CD14-positive monocyte (primary cell): ENCODE measurements at regions of chr2 and their contacts with region 1.

Region 1: GRCh38 chr2:99180755-99181623 is at the starts of genes MITD1 and MRPL30:
- DNase-seq: peak; percentile 92 to 95 (median 94)
- H3K4me3 ChIP-seq: peak within 1 kb of the TSS; percentile 82 to 95 (median 95)
- H3K4me3 Mint-ChIP-seq: peak within 1 kb of the TSS; percentile 97 to 100
- H3K27ac ChIP-seq: peak within 1 kb of the TSS; percentile 82 to 94
- H3K27ac Mint-ChIP-seq: peak within 1 kb of the TSS; percentile 96 to 99 (median 98)
- H3K4me1 ChIP-seq: peaks cover 24 to 31% of the 10 kb centered on the region in 2 donors
- H3K4me1 Mint-ChIP-seq: peaks cover 48% of the 10 kb centered on the region
- H3K27me3 ChIP-seq: no peaks in the 10 kb centered on the region
- H3K27me3 Mint-ChIP-seq: peaks cover 0 to 1% (median 0%) of the 10 kb centered on the region in 3 donors
- CTCF ChIP-seq: no peak
- polyA plus RNA-seq, gene MITD1: 24.9 to 33.8 (median 25.4) TPM
- polyA plus RNA-seq, gene MRPL30: 6.3 to 14.2 (median 9.7) TPM

Region 2: GRCh38 chr2:98608116-98608999 is 572.6 kb before region 1 on chr2 and contains the starts of genes COA5 and UNC50:
- intact Hi-C with region 1: loop called in 1 of 2 experiments (anchors 5 kb)
- DNase-seq: peak; percentile 90 to 96 (median 94)
- H3K4me3 ChIP-seq: peak within 1 kb of the TSS; percentile 70 to 95 (median 95)
- H3K4me3 Mint-ChIP-seq: peak within 1 kb of the TSS; percentile 81 to 98
- H3K27ac ChIP-seq: peak within 1 kb of the TSS; percentile 79 to 99
- H3K27ac Mint-ChIP-seq: peak within 1 kb of the TSS; percentile 94 to 98 (median 96)
- H3K4me1 ChIP-seq: peaks cover 31 to 33% of the 10 kb centered on the region in 2 donors
- H3K4me1 Mint-ChIP-seq: peaks cover 47% of the 10 kb centered on the region
- H3K27me3 ChIP-seq: no peaks in the 10 kb centered on the region
- H3K27me3 Mint-ChIP-seq: no peaks in the 10 kb centered on the region
- CTCF ChIP-seq: no peak
- polyA plus RNA-seq, gene COA5: 27.3 to 42.9 (median 39.0) TPM
- polyA plus RNA-seq, gene UNC50: 32.5 to 72.0 (median 62.8) TPM

Region 3: GRCh38 chr2:99141110-99142108 is 39.6 kb before region 1 on chr2 and contains the start of gene C2orf15:
- intact Hi-C with region 1: loop called in 1 of 2 experiments (anchors 5 kb)
- DNase-seq: peak; percentile 72 to 79 (median 74)
- H3K4me3 ChIP-seq: peak within 1 kb of the TSS; percentile 79 to 99 (median 97)
- H3K4me3 Mint-ChIP-seq: peak within 1 kb of the TSS; percentile 96 to 98
- H3K27ac ChIP-seq: peak within 1 kb of the TSS; percentile 56 to 65
- H3K27ac Mint-ChIP-seq: peak within 1 kb of the TSS; percentile 79 to 89 (median 87)
- H3K4me1 ChIP-seq: peaks cover 21 to 36% of the 10 kb centered on the region in 2 donors
- H3K4me1 Mint-ChIP-seq: peaks cover 48% of the 10 kb centered on the region
- H3K27me3 ChIP-seq: peaks cover 0 to 5% of the 10 kb centered on the region in 2 donors
- H3K27me3 Mint-ChIP-seq: peaks cover 0 to 15% (median 9%) of the 10 kb centered on the region in 3 donors
- CTCF ChIP-seq: no peak
- polyA plus RNA-seq, gene C2orf15: 0.09 to 0.29 (median 0.11) TPM

Region 4: DNA sequence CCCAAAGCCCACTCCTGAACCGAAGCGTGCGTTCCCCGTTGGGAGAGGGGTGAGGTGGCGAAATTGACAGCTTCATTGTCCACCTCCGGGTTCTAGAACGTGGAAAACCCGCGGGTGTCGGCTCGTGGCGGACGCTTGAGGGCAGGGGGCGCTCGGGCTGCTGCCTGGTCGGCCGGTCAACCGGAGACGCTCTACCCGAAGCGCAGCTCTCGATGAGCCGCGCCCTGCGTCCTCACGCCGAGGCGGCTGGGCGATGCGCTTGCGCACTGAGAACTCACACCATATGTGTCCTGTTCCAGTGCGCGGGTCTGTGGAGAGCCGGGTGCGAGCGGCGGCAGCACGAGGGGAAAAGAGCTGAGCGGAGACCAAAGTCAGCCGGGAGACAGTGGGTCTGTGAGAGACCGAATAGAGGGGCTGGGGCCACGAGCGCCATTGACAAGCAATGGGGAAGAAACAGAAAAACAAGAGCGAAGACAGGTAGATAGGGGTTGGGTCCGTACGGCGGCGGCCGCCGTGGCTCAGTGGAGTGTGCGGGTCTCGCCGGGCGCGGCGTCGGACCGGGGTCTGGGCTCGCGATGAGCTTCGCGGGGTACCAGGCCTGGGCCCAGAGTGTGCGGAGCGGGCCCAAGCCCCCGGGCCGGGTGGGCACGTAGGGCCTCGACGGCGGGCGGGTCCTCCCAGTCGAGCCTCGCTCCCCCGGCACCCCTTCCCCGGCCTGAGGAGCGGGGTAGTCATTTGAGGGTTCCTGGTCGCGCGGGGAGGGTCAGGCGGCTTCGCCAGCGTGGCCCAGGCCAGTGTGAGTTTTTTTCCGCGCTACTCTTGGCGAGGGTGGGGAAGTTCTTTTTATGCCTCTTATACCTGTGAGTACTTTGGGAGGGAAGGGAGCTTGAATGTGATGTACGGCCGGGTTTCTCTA is 156.4 kb after region 1 on chr2 and contains the start of gene EIF5B:
- intact Hi-C with region 1: loop called (anchors 1 to 2 kb)
- DNase-seq: peak; percentile 91 to 97 (median 93)
- H3K4me3 ChIP-seq: peak within 1 kb of the TSS; percentile 68 to 94 (median 94)
- H3K4me3 Mint-ChIP-seq: no peak within 1 kb of the TSS
- H3K27ac ChIP-seq: peak within 1 kb of the TSS; percentile 84 to 94
- H3K27ac Mint-ChIP-seq: no peak within 1 kb of the TSS
- H3K4me1 ChIP-seq: peaks cover 18 to 34% of the 10 kb centered on the region in 2 donors
- H3K4me1 Mint-ChIP-seq: peaks cover 21% of the 10 kb centered on the region
- H3K27me3 ChIP-seq: no peaks in the 10 kb centered on the region
- H3K27me3 Mint-ChIP-seq: no peaks in the 10 kb centered on the region
- CTCF ChIP-seq: peak; percentile 78
- polyA plus RNA-seq, gene EIF5B: 0.58 to 3.2 (median 1.5) TPM

Region 5: DNA sequence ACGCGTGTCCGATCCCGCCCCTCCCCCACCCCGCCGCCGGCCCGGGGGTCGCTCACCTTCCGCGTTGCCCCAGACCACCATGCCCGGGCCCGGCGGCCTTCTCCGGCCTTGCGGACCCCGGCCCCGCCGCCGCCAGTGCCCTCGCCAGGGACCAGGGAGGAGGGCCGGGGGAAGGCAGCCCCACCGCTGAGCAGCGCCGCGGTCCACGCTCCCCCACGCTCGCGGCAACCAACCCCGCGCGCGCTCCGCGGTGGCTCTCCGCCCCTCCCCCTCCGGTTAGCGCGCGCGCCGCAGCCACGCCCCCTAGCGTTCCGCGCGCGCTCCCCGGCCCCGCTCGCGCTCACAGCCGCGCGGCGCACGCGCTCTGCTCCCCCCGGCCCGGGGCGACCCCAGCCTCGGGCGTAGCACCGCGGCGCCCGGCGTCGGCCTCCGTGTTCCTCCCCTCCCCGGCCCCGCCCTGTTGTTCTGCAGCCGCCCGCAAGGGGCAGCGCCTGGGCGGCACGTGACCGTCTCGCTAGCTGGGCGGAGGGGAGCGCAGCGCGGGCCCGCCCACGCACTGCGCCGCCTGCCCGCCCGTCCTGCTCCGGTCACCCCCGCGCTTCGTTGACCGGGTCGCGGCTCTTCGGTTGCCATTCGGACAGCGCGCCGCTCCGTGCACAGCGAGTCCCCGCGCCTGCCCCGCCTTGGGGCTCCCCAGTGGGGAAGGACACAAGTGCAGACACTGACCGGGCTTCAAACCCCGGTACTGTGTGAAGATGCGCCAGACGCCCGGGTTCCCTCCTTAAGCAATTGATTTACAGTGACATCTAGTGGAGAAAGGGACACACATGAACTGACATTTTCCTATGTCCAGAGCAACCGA is 309.0 kb after region 1 on chr2 and contains the start of gene REV1:
- intact Hi-C with region 1: loop called in 1 of 2 experiments (anchors 10 kb)
- DNase-seq: peak; percentile 90 to 94 (median 93)
- H3K4me3 ChIP-seq: peak within 1 kb of the TSS; percentile 66 to 97 (median 95)
- H3K4me3 Mint-ChIP-seq: peak within 1 kb of the TSS; percentile 98 to 99
- H3K27ac ChIP-seq: peak within 1 kb of the TSS; percentile 82 to 94
- H3K27ac Mint-ChIP-seq: peak within 1 kb of the TSS; percentile 98 to 99 (median 98)
- H3K4me1 ChIP-seq: peaks cover 19 to 26% of the 10 kb centered on the region in 2 donors
- H3K4me1 Mint-ChIP-seq: peaks cover 29% of the 10 kb centered on the region
- H3K27me3 ChIP-seq: no peaks in the 10 kb centered on the region
- H3K27me3 Mint-ChIP-seq: peaks cover 0 to 7% (median 2%) of the 10 kb centered on the region in 3 donors
- CTCF ChIP-seq: peak; percentile 86
- polyA plus RNA-seq, gene REV1: 6.5 to 39.9 (median 9.5) TPM

Region 6: GRCh38 chr2:100029454-100029853 is 848.5 kb after region 1 on chr2:
- intact Hi-C with region 1: no loop called
- DNase-seq: no peak
- H3K4me3 ChIP-seq: no peak overlapping the region
- H3K4me3 Mint-ChIP-seq: no peak overlapping the region
- H3K27ac ChIP-seq: no peak overlapping the region
- H3K27ac Mint-ChIP-seq: no peak overlapping the region
- H3K4me1 ChIP-seq: peaks cover 0 to 5% of the 10 kb centered on the region in 2 donors
- H3K4me1 Mint-ChIP-seq: peaks cover 8% of the 10 kb centered on the region
- H3K27me3 ChIP-seq: no peaks in the 10 kb centered on the region
- H3K27me3 Mint-ChIP-seq: no peaks in the 10 kb centered on the region
- CTCF ChIP-seq: peak; percentile 15